Activated B cell treated with CpG ODN at 0.5 μM for 24 hours (primary cell): ENCODE measurements at regions of chr13 and their contacts with region 1.

Region 1: DNA sequence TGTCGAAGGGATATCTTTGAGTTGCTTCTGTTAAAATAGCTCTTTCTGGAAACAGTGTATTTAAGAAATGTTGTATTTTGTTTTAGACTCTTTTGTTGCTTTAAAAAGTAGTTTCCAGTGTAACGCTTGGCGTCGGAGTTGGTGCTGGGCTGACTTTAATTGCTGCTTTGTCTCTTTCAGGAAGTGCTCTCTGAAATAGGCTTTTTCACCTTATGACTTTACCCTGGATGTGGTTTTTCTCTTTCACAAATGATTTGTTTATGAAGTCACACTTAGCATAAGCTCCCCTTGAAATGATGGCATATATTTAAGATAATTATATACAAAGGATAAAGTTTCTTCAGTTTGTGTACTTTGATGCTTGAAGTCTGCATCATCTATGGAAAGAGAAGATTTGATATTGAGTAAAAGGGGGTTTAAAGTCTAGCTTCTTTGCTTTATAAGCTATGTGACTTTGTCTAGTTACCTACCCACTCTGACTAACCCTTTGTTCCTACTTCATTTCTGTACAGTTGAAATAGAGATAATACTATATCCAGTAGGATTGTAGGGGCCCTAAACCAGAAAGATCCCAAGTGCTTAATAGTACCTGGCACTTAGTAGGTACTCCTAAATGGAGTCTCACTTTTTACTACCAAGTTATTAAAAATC is at the start of gene GPR18:
- DNase-seq: no peak
- ATAC-seq: peak; percentile 65
- H3K4me3 Mint-ChIP-seq: peak within 1 kb of the TSS; percentile 94
- H3K27ac Mint-ChIP-seq: peak within 1 kb of the TSS; percentile 96
- H3K4me1 Mint-ChIP-seq: peaks cover 86% of the 10 kb centered on the region
- H3K27me3 Mint-ChIP-seq: no peaks in the 10 kb centered on the region
- CTCF ChIP-seq: no peak
- total RNA-seq, gene GPR18: 29.0 and 32.4 TPM in 2 replicates

Region 2: GRCh38 chr13:99176309-99177276 is 81.7 kb before region 1 on chr13:
- CTCF ChIA-PET with region 1: interaction called, 370 read pairs
- POLR2A ChIA-PET with region 1: interaction called, 5 read pairs
- intact Hi-C with region 1: no loop called
- DNase-seq: peak; percentile 64
- ATAC-seq: peak; percentile 90
- H3K4me3 Mint-ChIP-seq: peak overlapping the region; percentile 58
- H3K27ac Mint-ChIP-seq: peak overlapping the region; percentile 24
- H3K4me1 Mint-ChIP-seq: peaks cover 43% of the 10 kb centered on the region
- H3K27me3 Mint-ChIP-seq: peaks cover 2% of the 10 kb centered on the region
- CTCF ChIP-seq: no peak

Region 3: DNA sequence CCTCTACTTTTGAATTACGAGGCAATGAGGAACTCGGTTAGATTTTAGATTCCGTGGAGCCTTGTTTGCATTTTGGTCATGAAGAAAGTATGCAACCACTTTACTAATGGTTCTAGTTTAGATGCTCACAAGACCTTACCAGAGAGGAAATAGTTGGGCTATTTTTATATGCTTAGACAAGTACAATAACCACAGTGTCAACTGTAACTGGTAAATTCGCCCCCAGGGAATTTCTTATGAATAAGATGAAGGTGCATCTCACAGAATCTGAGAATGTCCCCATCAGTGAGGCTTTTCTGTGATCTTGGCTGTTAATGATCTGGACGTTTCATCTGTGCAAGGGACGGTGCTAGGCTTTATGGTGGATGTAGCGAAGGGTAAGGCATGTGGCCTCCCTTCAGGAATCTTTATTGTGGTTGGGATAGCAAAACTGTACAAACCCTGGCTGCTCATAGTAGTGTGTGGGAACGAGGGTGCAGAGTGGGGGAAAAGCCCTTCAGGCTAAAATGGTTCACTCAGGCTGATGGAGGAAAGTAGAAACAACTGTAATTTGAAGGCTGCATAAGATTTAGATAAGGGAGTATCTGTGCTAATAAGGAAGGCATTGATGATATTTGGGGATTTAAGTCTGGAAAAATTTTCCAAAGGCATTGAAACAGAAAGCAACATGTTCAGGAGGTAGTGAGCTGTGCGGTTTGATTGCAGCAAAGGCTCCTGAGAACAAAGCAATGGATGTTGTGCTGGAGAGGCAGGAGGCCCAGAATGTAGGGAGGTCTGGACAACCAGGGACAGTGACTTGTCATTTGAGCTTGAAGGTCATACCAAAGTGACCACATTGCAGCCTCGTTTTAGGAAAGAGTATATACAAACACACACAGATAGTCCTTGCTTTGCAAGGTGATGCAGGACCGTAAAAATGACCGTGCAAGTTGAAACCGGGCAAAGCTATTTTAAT is 29.3 kb before region 1 on chr13:
- CTCF ChIA-PET with region 1: interaction called, 3 read pairs
- POLR2A ChIA-PET with region 1: interaction called, 21 read pairs
- intact Hi-C with region 1: loop called (anchors 1 kb)
- DNase-seq: no peak
- ATAC-seq: peak; percentile 83
- H3K4me3 Mint-ChIP-seq: peak overlapping the region; percentile 76
- H3K27ac Mint-ChIP-seq: peak overlapping the region; percentile 88
- H3K4me1 Mint-ChIP-seq: peaks cover 87% of the 10 kb centered on the region
- H3K27me3 Mint-ChIP-seq: no peaks in the 10 kb centered on the region
- CTCF ChIP-seq: no peak

Region 4: DNA sequence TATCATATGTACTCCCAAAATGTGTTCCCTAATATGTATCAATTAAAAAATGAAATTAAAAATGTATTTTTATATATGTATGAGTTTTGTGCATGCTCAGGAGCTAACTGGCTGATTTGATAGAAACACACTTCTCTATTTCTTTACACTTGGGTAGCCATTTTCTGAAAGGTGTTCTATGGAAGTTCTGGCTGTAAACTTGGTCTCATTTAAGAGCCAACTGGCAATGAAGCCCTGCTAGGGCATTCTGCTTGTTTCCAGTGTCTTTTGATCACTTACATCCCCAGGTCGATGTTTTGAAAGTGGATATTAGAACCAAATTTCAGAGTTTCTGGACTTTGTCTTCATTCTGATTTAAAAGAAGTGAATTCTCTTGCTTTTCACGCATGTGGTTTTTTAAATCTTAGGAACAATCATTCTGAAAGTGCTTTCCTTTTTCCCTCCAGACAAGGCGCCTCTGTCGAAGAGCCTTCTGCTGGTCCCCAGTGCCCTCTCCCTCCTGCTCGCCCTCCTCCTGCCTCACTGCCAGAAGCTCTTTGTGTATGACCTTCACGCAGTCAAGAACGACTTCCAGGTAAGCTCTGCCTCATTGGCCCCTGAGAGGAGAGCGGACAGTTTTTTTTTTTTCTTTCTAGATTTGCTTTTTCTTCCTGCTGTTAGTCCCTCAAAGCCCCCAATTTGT is 20.2 kb before region 1 on chr13:
- CTCF ChIA-PET with region 1: interaction called, 4 read pairs
- POLR2A ChIA-PET with region 1: interaction called, 5 read pairs
- intact Hi-C with region 1: loop called (anchors 1 kb)
- DNase-seq: no peak
- ATAC-seq: peak; percentile 74
- H3K4me3 Mint-ChIP-seq: peak overlapping the region; percentile 72
- H3K27ac Mint-ChIP-seq: peak overlapping the region; percentile 84
- H3K4me1 Mint-ChIP-seq: peaks cover 62% of the 10 kb centered on the region
- H3K27me3 Mint-ChIP-seq: no peaks in the 10 kb centered on the region
- CTCF ChIP-seq: no peak

Region 5: DNA sequence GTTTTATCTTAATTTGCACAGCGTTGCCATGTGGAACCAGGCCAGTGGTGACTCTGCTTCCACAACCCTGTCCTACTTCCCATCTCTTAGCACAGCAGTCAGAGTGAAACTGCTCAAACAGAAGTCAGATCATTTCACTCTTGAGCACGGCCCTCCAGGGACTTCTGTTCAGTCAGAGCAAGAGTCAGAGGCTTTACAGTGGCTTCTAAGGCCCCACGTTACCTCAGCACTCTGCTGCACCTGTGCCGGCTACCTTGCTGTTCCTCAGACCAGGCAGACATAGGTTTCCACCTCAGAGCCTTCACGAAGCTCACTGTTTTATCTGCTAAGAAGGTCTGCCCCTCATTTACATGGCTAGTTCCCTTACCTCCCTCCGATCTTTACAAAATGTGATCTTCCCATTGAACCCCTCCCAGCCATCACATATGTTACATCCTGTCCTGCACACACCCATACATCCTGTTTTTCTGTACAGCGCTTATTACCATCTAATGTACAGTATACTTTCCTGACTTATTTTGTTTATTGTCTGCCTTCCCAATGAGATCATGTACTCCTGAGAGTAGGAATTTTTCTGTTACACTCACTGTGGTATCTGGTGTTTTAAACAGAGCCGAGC is 284.6 kb after region 1 on chr13:
- CTCF ChIA-PET with region 1: no interaction called
- POLR2A ChIA-PET with region 1: interaction called, 3 read pairs
- intact Hi-C with region 1: loop called (anchors 2 kb)
- DNase-seq: peak; percentile 61
- ATAC-seq: peak; percentile 94
- H3K4me3 Mint-ChIP-seq: peak overlapping the region; percentile 53
- H3K27ac Mint-ChIP-seq: peak overlapping the region; percentile 84
- H3K4me1 Mint-ChIP-seq: peaks cover 67% of the 10 kb centered on the region
- H3K27me3 Mint-ChIP-seq: no peaks in the 10 kb centered on the region
- CTCF ChIP-seq: no peak